ENCODE measurements at regions of chr1 and their contacts with region 1.

Region 1: DNA sequence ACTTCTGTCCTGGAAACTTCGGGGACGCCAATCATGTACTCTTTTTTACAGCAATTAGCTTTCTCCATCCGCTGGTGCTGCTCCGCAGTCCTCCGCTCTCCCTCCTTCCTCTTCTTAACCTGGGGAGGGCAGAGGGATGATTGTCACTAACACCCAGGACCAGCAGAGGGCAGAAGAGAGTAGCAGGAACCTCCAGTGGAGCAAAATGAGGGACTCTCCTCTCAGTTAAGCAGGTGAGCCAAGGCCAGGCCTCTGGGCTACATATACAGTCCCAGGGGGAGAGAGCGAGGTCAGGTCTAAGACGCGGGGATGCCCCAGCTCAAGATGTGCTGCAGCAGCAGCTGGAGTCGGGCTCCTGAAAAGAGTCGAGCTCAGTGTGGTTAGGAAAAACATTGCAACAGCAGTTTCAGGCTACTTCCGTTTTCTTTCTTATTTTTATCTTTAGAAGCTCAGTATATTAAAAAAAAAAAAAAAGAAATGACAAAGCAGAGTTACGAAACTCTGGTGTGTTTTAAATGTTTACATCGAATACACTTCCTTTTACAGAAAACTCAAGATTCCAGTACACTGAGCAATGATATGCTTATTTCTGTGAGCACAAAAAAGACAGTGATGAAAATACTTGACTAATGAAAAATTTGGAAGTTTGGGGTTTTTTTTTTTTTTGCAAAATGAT is 25.7 kb upstream of the NLRP3 start:
- DNase-seq: peak; percentile 98
- ATAC-seq: peak; percentile 84
- H3K4me3 ChIP-seq: peak overlapping the region; percentile 26; the same call in 1 of the 2 replicates
- H3K27ac ChIP-seq: no peak overlapping the region
- H3K4me1 ChIP-seq: peaks cover 24% of the 10 kb centered on the region
- H3K27me3 ChIP-seq: no peaks in the 10 kb centered on the region
- CTCF ChIP-seq: peak; percentile 99

Region 2: DNA sequence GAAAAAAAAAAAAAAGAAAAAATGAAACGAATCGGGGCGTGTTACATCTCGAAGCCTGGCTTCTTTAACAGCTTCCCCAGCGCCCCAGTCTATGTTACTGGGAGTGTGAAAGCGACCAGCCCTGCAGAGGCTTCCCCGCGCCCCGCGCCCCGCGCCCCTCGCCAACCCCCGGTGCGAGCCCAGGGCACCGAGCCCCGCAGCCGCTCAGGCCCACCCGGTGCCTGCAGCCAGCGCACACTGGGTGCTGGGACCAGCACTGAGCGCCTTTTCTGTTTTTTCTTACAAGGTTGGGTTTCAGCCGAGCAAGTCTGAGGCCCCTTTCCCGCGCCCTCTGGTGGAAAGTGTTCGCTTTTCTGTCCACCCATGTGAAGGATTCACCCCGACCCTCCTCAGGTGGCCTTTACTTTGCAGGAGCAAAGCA is 16.5 kb before region 1 on chr1:
- CTCF ChIA-PET with region 1: interaction called, 9 read pairs
- POLR2A ChIA-PET with region 1: no interaction called
- intact Hi-C with region 1: loop called (anchors 1 kb)
- DNase-seq: no peak
- ATAC-seq: no peak
- H3K4me3 ChIP-seq: no peak overlapping the region
- H3K27ac ChIP-seq: no peak overlapping the region
- H3K4me1 ChIP-seq: peaks cover 5% of the 10 kb centered on the region; the same call in 1 of the 2 replicates
- H3K27me3 ChIP-seq: no peaks in the 10 kb centered on the region
- CTCF ChIP-seq: peak; percentile 40

Region 3: DNA sequence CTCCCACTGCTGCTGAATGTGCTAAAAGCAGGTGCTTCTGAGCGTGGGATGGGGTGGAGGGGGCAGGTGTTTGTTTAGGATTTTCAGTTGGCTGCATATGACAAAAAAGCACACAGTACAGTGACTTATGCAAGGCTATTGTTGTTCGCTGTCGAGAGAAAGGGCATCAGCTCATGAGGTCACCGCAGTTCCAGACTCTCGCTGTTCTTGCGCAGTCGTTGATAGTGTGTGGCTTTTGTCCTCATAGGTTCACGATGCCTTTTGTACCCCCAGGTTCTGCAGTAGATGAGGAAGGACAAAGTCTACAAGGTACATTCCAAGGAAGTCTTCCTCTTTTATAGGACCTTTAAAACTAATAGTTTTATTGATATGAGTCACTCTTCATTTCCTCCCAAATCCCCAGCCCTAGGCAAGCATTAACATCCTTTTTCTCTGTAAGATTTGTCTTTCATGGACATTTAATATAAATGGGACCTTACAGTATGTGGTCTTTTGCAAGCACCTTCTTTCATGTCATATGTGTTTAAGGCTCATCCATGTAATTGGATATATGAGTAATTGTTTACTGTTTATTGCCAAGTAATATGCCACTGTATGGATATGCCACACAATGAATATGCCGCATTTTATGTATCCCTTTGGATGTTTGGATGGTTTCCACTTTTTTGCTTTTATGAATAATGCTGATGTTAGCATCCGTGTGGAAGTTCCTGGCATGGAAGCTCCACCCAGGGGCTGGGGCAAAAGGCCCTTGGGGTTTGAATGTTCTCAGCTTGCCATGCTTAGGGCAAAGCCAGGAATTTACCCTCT is 11.3 kb after region 1 on chr1:
- CTCF ChIA-PET with region 1: interaction called, 11 read pairs
- POLR2A ChIA-PET with region 1: no interaction called
- intact Hi-C with region 1: no loop called
- DNase-seq: peak; percentile 98
- ATAC-seq: peak; percentile 78
- H3K4me3 ChIP-seq: peak overlapping the region; percentile 25
- H3K27ac ChIP-seq: peak overlapping the region; percentile 81
- H3K4me1 ChIP-seq: peaks cover 31% of the 10 kb centered on the region
- H3K27me3 ChIP-seq: no peaks in the 10 kb centered on the region
- CTCF ChIP-seq: no peak

Region 4: GRCh38 chr1:247448107-247448791 is 58.0 kb after region 1 on chr1:
- CTCF ChIA-PET with region 1: interaction called, 7 read pairs
- POLR2A ChIA-PET with region 1: interaction called, 3 read pairs
- intact Hi-C with region 1: loop called (anchors 1 kb)
- DNase-seq: peak; percentile 71
- ATAC-seq: peak; percentile 85
- H3K4me3 ChIP-seq: peak overlapping the region; percentile 64
- H3K27ac ChIP-seq: no peak overlapping the region
- H3K4me1 ChIP-seq: peaks cover 6% of the 10 kb centered on the region; the same call in 1 of the 2 replicates
- H3K27me3 ChIP-seq: peaks cover 20% of the 10 kb centered on the region
- CTCF ChIP-seq: 0 out of 2 replicates have a peak, but pooled peaks have one; percentile 39

Measured in PC-3 (cell line).